Activated B cell treated with CpG ODN at 0.5 μM for 24 hours (primary cell): ENCODE measurements at regions of chr9 and their contacts with region 1.

Region 1: DNA sequence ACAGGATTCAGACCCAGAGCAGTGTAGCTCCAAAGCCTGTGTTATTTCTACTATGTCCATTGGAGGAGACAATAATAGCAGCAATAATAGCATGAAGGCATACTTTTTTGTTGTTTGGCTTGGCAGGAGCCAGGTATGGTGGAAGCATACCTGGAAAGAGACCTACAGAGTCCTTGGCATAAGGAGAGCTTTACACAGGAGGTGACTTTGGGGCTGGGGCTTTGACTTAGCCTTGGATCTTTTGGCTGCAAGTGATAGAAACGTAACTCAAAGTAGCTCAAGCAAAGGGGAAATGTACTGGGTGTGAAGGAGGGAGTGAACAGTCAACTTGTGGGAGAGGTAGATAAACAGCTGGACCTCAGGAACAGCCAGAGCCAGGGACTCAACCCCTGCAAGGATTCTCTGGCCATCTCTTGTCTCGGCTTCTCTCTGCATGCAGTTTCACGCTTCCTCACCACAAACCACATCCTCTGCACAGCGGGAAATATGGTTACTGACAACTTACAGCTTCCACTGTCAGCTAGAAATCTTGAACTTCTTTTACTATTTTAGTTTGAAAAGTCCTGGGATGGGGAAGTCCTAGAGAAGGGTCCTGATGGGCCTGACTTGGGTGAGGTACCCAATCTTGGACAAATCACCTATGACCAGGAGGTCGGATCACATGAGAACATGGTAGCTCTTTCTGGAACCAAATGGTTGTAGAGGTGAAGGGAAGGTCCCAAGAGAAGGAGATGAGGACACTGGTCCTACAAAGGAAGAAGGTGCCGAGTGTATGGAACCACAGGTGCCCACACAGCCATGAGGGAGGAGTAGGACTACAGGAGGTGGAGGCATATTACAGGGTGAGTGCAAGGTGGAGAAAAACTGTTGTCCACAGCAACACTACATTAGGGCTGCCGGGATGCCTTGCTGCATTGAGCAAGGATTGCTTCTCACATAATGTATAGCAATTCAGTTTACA is 47.0 kb upstream of the TGFBR1 start:
- DNase-seq: peak; percentile 36
- ATAC-seq: peak; percentile 51
- H3K4me3 Mint-ChIP-seq: peak overlapping the region; percentile 70
- H3K27ac Mint-ChIP-seq: peak overlapping the region; percentile 94
- H3K4me1 Mint-ChIP-seq: peaks cover 73% of the 10 kb centered on the region
- H3K27me3 Mint-ChIP-seq: no peaks in the 10 kb centered on the region
- CTCF ChIP-seq: no peak

Region 2: DNA sequence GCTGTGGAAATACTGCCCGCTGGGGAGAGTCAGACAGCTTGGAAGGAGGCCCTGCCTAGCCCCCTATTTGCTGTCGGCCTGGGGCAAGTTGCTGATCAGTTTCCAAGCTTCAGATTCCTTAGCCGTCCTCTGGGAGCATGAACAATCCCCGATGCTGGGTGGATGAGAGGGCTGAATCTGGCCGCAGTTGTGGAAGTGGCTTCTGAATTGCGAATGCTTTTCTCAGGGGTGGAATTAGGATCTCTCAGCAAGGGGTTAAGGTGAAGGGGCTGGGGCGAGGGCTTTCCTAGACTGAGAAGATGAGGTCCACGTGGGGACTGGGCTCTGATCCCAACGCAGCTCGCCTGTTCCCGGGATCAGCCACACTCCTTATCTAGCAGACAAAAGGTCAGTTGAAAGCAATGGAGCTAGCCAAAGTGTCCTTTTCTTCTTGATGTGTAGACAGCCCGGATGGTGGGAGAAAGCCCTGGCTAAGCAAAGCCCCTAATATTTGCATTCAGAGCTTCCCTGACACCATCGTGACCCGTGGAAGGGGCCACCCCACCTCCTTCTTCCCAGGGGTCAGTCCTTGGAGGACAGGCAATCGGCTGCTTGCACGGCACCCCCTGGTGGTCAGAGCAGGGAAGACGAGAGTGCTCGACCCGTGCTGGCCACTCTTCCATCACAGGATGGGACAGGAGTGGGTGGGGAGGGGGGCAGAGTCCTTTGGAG is 59.3 kb before region 1 on chr9:
- CTCF ChIA-PET with region 1: interaction called, 6 read pairs
- POLR2A ChIA-PET with region 1: interaction called, 6 read pairs
- intact Hi-C with region 1: loop called (anchors 1 kb)
- DNase-seq: peak; percentile 57
- ATAC-seq: peak; percentile 74
- H3K4me3 Mint-ChIP-seq: no peak overlapping the region
- H3K27ac Mint-ChIP-seq: no peak overlapping the region
- H3K4me1 Mint-ChIP-seq: peaks cover 21% of the 10 kb centered on the region
- H3K27me3 Mint-ChIP-seq: peaks cover 2% of the 10 kb centered on the region
- CTCF ChIP-seq: peak; percentile 67

Region 3: GRCh38 chr9:99076483-99077171 is 18.7 kb after region 1 on chr9:
- CTCF ChIA-PET with region 1: no interaction called
- POLR2A ChIA-PET with region 1: no interaction called
- intact Hi-C with region 1: loop called (anchors 1 kb)
- DNase-seq: no peak
- ATAC-seq: peak; percentile 58
- H3K4me3 Mint-ChIP-seq: no peak overlapping the region
- H3K27ac Mint-ChIP-seq: peak overlapping the region; percentile 64
- H3K4me1 Mint-ChIP-seq: peaks cover 14% of the 10 kb centered on the region
- H3K27me3 Mint-ChIP-seq: no peaks in the 10 kb centered on the region
- CTCF ChIP-seq: no peak

Region 4: DNA sequence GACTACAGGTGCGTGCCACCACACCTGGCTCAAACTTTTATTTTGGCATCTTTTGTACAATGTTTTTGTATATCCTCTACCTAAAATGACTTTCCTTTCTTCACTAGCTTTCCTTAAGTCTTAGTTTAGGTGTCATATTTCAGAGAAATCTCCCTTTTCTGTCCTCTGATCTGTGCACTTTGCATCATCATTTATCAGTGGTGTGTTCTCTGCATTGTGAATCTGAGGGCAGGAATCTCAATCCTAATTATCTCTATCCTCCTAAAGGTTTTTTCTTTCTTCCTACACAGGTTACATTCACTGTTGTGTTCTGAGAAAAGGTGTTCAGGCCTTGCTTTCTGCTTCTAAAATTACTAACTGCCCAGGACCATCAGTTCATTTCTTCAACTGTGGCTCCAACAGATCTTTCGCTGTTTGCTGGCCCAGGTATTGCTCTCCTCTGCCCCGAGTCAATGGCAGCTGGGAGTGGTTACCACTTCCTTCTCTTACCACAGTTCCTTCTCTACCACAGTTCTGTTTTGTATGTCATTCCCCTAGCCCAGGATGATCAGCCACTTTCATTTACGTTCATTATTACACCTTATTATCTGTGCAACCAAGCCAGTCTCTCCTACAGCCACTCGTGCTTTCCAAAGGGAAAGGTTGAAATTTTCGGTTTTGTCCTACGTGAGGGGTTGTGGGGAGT is 61.0 kb after region 1 on chr9:
- CTCF ChIA-PET with region 1: interaction called, 3 read pairs
- POLR2A ChIA-PET with region 1: interaction called, 12 read pairs
- intact Hi-C with region 1: no loop called
- DNase-seq: no peak
- ATAC-seq: peak; percentile 97
- H3K4me3 Mint-ChIP-seq: peak overlapping the region; percentile 73
- H3K27ac Mint-ChIP-seq: peak overlapping the region; percentile 71
- H3K4me1 Mint-ChIP-seq: peaks cover 79% of the 10 kb centered on the region
- H3K27me3 Mint-ChIP-seq: no peaks in the 10 kb centered on the region
- CTCF ChIP-seq: no peak